A673 (cell line): ENCODE measurements at regions of chr10 and their contacts with region 1.

Region 1: DNA sequence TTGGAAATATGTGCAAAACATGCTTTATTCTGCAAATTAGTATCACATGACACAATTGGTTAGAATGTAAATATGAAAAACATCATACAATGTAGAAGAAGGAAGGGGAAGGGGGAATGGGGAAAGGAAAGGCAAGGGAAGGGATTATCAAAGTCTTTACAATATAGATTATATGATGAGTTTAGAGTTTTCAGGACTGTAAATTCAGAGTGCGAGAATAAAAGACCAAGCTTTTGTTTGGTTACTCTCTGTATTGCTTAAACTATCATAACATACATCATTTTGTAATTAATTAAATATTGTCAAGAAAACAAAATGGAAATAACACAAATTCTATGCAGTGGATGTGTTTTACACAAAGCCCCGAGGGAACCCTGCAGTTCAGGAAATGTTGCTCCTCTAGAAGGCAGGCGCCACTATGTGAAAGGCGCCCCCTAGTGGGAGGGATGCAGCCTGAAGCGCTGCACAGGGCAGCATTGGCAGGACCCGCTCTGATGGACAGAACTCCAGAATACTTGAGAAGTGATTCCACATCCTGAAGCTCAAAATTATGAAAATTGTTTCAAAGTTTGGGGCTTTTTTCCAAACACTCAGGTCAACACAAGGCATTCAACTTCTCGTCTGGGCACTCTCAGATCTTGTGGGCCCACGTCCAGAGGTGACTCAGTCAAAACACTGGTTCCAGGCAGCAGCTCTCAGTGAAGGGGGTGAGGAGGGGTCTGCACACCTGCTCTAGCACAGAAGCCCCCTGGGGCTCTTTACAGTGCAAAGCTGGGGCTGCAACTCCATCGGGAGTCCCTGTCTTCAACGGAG is 31.6 kb upstream of the TMEM254 start:
- DNase-seq: peak; percentile 85
- H3K4me3 ChIP-seq: no peak overlapping the region
- H3K27ac ChIP-seq: no peak overlapping the region
- H3K4me1 ChIP-seq: no peaks in the 10 kb centered on the region
- H3K27me3 ChIP-seq: peaks cover 6% of the 10 kb centered on the region
- CTCF ChIP-seq: peak; percentile 95

Region 2: DNA sequence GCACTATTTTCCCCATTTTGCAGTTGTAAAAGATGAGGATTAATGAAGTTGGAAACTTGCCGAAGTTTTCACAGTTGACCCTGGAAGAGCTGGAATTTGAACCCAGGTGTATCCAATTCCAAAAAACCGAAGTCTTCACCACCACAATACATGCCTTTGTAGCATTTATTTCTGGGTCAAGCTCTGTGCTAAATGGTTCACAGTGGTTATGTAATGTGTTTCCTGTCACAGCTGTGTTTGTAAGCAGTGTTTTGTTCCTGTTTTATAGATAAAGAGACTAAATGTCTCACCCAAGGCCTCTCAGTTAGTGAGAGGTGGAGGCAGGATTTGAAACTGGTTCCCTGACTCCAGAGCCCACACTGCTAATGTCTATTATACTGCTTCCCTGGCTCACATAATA is 504.2 kb before region 1 on chr10:
- CTCF ChIA-PET with region 1: no interaction called
- POLR2A ChIA-PET with region 1: no interaction called
- intact Hi-C with region 1: loop called (anchors 10 kb)
- DNase-seq: no peak
- H3K4me3 ChIP-seq: no peak overlapping the region
- H3K27ac ChIP-seq: no peak overlapping the region
- H3K4me1 ChIP-seq: no peaks in the 10 kb centered on the region
- H3K27me3 ChIP-seq: no peaks in the 10 kb centered on the region
- CTCF ChIP-seq: no peak